Posterior vena cava (tissue), 2 donors: ENCODE measurements at regions of chr16 and their contacts with region 1.

Region 1: DNA sequence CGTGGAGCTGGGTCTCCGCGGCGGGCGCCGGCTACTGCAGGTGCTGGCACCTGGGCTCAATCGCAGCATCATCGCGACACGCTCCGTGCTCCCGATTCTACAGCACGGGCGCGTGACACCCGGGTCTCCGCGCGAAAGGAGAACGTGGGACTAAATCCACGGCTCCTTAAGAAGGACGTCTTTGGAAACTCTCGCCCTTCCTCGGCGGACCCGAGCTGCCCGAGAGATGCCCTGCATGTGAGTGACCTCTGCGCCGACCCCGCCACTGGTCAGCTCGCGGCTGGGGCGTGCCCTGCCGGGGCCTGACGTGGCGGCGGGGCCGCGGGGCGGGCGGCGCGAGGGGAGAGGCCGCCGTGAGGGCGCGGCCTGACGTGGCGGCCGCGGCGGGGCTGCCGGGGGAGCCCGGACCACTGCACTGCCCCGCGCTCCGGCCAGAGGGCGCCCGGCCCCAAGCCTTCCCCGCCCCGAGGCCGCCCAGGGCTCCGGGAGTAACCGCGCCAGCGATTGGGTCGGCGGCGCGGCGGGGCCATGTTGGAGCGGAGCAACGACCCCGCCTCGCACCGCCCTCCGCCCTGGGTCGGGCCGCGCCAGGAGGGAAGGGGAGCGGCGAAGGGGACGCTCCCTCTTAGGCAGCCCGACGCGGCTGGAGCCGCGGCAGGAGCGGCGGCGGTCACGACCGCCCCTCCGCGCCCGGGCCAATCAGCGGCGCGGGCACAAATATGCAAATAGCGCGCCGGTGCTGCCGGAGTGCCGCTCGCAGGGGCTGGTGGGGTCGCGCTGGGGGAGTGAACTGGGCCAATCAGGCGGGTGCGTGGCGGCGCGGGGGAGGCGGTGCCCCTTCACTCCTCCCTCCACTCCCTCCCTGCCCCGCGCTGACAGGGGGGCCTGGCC is 75.6 kb downstream of the CHD9 start:
- DNase-seq: peak; percentile 99

Region 2: DNA sequence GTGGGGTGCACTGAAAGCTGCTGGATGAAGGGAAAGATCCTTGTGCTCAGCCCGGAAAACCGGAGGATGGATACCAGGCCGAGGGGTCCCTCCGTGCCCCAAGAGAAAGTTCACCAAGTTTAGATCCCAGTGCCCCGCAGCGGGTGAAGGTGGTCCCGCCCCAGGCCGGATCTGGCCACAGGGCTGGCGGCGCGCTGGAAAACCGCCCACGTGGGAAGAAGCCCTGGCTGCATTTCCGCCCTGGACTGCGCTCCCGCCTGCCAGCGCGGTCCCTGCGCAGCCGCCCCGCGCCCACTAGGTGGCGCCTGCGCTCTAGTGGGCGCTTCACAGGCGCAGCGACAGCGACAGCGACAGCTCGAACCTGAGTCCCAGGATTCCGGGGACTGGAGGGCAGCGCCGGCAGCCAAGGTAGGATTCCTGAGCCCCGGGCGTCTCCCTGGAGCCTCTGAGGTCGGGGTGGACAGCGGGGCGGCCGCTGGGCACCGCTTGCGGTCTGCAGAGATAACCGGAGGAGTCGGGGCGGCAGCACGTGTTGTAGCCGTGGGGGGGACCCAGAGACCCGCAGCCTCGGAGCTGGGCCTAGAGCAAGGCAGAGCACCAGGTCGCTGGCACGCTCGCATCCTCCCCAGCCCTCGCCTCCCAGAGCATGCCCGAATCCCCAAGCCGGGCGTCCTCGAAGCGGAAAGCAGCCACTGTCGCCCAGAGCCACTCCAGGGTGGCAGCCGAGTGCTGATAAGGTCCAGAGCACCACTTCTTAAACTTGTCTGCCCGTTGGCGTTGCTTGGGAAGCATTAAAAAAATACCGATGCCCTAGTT is 75.5 kb before region 1 on chr16 and contains the start of gene CHD9:
- intact Hi-C with region 1: loop called in 1 of 2 experiments (anchors 10 kb)
- DNase-seq: peak; percentile 94
- total RNA-seq, gene CHD9: 84.7 to 90.4 TPM

Region 3: DNA sequence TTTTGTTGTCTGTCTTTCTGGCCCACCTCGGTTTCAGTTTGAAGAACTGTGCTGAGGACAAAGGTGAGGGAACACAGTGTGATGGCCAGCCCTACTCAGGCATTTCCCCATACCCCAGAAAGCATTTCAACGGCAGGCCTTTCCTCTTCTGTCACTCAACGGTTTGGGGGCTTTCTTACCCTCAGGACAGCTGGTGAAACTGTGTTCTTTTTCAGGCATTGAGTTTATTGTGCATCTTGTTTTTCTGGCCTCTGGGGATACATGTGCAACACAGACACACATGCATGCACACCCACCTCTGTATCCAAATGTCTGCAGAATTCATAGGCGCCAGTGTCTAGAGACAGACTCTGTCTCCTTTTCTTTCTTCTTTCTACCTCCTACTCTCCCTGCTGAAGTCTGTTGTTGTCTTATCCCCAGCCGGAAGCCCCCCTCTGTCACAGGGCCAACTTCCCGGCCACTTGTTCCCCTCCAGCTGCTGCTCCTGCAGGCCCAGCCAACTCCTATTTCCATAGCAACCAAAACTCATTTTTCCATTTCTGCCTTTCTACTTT is 58.6 kb before region 1 on chr16:
- intact Hi-C with region 1: no loop called
- DNase-seq: peak; percentile 86

Region 4: DNA sequence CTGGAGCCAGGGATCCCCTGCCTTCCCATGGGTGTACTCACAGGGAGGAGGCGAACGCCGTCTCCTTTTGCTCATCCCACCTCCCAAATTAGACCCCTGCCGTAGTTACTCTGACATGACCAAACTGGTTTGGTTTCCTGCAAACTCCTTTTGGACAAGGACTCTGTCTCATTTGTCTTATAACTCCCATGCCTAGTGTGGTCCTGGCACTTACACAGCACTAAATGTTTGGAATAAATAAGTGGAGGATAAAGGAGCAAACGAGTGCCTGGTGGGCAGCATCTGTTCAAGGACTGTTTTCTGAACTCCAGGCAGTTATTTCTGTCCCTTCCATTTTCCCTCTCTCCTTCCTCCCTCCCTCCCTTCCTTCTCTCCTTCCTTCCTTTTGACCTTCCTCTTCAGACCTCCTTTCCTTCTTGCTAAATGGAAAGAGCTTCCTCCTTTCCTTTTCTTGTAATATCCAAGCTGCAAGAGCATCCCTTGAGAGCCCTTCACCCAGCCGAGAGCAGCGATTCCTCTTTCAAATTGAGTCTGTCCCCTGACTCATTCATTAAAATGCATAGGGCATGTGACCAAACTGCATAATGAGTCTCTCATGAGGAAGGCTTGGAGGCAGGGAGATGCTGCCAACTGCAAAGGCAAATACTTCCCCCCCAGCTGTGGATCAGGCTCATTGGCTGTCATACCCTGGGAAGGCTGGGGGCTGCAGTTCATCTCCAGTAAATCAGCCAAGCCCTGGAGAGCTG is 38.8 kb before region 1 on chr16:
- intact Hi-C with region 1: loop called in 1 of 2 experiments (anchors 5 kb)
- DNase-seq: peak; percentile 92

Region 5: GRCh38 chr16:53099318-53100130 is 30.9 kb before region 1 on chr16:
- intact Hi-C with region 1: loop called (anchors 1 to 5 kb)
- DNase-seq: peak; percentile 96

Region 6: GRCh38 chr16:53175118-53175517 is 44.7 kb after region 1 on chr16:
- intact Hi-C with region 1: no loop called
- DNase-seq: no peak

Region 7: GRCh38 chr16:53207810-53208752 is 77.7 kb after region 1 on chr16:
- intact Hi-C with region 1: loop called in 1 of 2 experiments (anchors 10 kb)
- DNase-seq: no peak